ENCODE measurements at regions of chr3 and their contacts with region 1.

Region 1: GRCh38 chr3:160003520-160004128 is 15.0 kb downstream of the IL12A start:
- DNase-seq: no peak
- ATAC-seq: peak; percentile 96
- H3K4me3 ChIP-seq: no peak overlapping the region
- H3K27ac ChIP-seq: no peak overlapping the region
- H3K4me1 ChIP-seq: peaks cover 6% of the 10 kb centered on the region; the same call in 1 of the 2 replicates
- H3K27me3 ChIP-seq: no peaks in the 10 kb centered on the region
- CTCF ChIP-seq: peak; percentile 65 to 75 (median 75)
- EP300 ChIP-seq: no peak
- POLR2A ChIP-seq: no peak
- RAD21 ChIP-seq: peak; percentile 81

Region 2: GRCh38 chr3:159804726-159805410 is 198.8 kb before region 1 on chr3:
- CTCF ChIA-PET with region 1: interaction called, 23 read pairs
- POLR2A ChIA-PET with region 1: no interaction called
- RAD21 ChIA-PET with region 1: interaction called, 7 read pairs
- SMC1A ChIA-PET with region 1: interaction called, 3 read pairs
- in situ Hi-C with region 1: no loop called
- intact Hi-C with region 1: no loop called
- DNase-seq: no peak
- ATAC-seq: peak; percentile 99
- H3K4me3 ChIP-seq: no peak overlapping the region
- H3K27ac ChIP-seq: no peak overlapping the region
- H3K4me1 ChIP-seq: no peaks in the 10 kb centered on the region
- H3K27me3 ChIP-seq: peaks cover 0 to 1% of the 10 kb centered on the region in 2 experiments; a peak in 2 of 4 replicates
- CTCF ChIP-seq: peak; percentile 87 to 92 (median 90)
- EP300 ChIP-seq: no peak
- POLR2A ChIP-seq: no peak
- RAD21 ChIP-seq: peak; percentile 96

Region 3: GRCh38 chr3:159902546-159903314 is 100.9 kb before region 1 on chr3:
- CTCF ChIA-PET with region 1: interaction called, 88 read pairs
- POLR2A ChIA-PET with region 1: interaction called, 3 read pairs
- RAD21 ChIA-PET with region 1: interaction called, 9 read pairs
- SMC1A ChIA-PET with region 1: interaction called, 589 read pairs
- in situ Hi-C with region 1: no loop called
- intact Hi-C with region 1: no loop called
- DNase-seq: no peak
- ATAC-seq: peak; percentile 78
- H3K4me3 ChIP-seq: no peak overlapping the region
- H3K27ac ChIP-seq: peak overlapping the region; percentile 52
- H3K4me1 ChIP-seq: peaks cover 28% of the 10 kb centered on the region
- H3K27me3 ChIP-seq: no peaks in the 10 kb centered on the region
- CTCF ChIP-seq: no peak
- EP300 ChIP-seq: no peak
- POLR2A ChIP-seq: no peak
- RAD21 ChIP-seq: no peak

Region 4: DNA sequence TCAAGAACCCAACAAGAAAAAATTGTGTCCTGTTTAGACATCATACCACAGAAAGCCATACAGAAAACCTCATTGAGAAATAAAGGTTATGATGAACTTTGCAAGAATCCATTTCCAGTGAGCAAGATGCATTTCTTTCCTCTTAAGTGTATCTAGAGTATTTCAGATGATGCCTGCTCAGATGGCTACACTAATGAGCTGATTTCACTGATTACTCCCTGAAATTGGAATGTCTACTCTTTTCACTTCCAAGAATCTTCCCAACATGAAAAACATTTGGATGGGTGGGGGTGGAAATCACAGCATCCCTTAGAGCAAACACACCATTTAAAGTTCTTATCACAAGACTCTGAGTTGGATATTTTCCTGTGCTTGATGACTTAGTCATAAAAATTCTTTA is 56.4 kb before region 1 on chr3:
- CTCF ChIA-PET with region 1: interaction called, 11 read pairs
- POLR2A ChIA-PET with region 1: no interaction called
- RAD21 ChIA-PET with region 1: interaction called, 7 read pairs
- SMC1A ChIA-PET with region 1: interaction called, 3 read pairs
- in situ Hi-C with region 1: no loop called
- intact Hi-C with region 1: no loop called
- DNase-seq: no peak
- ATAC-seq: no peak
- H3K4me3 ChIP-seq: no peak overlapping the region
- H3K27ac ChIP-seq: no peak overlapping the region
- H3K4me1 ChIP-seq: peaks cover 10% of the 10 kb centered on the region
- H3K27me3 ChIP-seq: no peaks in the 10 kb centered on the region
- CTCF ChIP-seq: no peak
- EP300 ChIP-seq: no peak
- POLR2A ChIP-seq: no peak
- RAD21 ChIP-seq: no peak

Region 5: DNA sequence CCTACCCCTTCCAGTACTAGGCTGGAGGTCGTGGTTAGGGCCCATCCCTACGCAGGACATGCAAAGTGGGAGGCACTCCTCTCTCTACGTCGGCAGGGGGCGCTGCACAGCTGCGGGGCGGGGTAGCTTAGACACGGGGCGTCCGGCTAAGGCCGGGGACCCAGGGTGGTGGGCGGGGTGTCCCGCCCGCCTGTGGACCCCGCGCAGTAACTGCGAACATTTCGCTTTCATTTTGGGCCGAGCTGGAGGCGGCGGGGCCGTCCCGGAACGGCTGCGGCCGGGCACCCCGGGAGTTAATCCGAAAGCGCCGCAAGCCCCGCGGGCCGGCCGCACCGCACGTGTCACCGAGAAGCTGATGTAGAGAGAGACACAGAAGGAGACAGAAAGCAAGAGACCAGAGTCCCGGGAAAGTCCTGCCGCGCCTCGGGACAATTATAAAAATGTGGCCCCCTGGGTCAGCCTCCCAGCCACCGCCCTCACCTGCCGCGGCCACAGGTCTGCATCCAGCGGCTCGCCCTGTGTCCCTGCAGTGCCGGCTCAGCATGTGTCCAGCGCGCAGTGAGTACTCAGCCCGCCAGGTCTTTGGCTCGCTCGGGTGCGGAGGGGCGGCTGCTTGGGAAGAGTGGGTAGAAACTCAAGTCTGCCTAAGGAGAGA is 14.9 kb before region 1 on chr3 and contains the start of gene IL12A:
- CTCF ChIA-PET with region 1: interaction called, 288 read pairs
- POLR2A ChIA-PET with region 1: interaction called, 6 read pairs
- RAD21 ChIA-PET with region 1: interaction called, 97 read pairs
- SMC1A ChIA-PET with region 1: interaction called, 127 read pairs
- in situ Hi-C with region 1: no loop called
- intact Hi-C with region 1: loop called (anchors 1 kb)
- DNase-seq: peak; percentile 72
- ATAC-seq: peak; percentile 92
- H3K4me3 ChIP-seq: peak within 1 kb of the TSS; percentile 74
- H3K27ac ChIP-seq: peak within 1 kb of the TSS; percentile 75
- H3K4me1 ChIP-seq: peaks cover 17% of the 10 kb centered on the region
- H3K27me3 ChIP-seq: no peaks in the 10 kb centered on the region
- CTCF ChIP-seq: peak; percentile 90 to 96 (median 96)
- EP300 ChIP-seq: no peak
- POLR2A ChIP-seq: peak; percentile 70
- RAD21 ChIP-seq: peak; percentile 76
- polyA plus RNA-seq, gene IL12A: 0.50 to 2.6 TPM

Region 6: GRCh38 chr3:160060409-160061023 is 56.9 kb after region 1 on chr3:
- CTCF ChIA-PET with region 1: no interaction called
- POLR2A ChIA-PET with region 1: no interaction called
- RAD21 ChIA-PET with region 1: no interaction called
- SMC1A ChIA-PET with region 1: no interaction called
- in situ Hi-C with region 1: no loop called
- intact Hi-C with region 1: no loop called
- DNase-seq: no peak
- ATAC-seq: no peak
- H3K4me3 ChIP-seq: no peak overlapping the region
- H3K27ac ChIP-seq: no peak overlapping the region
- H3K4me1 ChIP-seq: no peaks in the 10 kb centered on the region
- H3K27me3 ChIP-seq: no peaks in the 10 kb centered on the region
- CTCF ChIP-seq: no peak
- EP300 ChIP-seq: no peak
- POLR2A ChIP-seq: no peak
- RAD21 ChIP-seq: no peak